IMR-90 (cell line): ENCODE measurements at regions of chr9 and their contacts with region 1.

Region 1: DNA sequence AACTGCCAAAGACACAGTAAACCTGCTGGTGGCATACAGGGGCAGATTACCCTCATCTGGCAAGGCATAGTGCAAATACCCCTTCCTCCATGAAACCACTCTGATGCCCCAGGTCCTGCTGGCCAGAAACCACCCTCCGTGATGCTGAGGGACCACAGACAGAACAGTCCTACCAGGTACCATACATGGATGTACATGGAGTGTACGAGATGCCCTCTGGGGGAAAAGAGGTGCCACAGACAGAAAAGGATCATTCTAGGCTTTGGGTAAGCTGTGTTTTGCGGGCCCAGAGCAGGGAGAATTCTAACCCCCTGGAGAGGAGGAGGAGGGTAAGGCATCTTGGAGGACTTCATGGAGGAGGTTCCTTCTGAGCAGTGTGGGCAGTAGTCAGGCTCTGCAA is 68.4 kb downstream of the GABBR2 start:
- DNase-seq: no peak
- ATAC-seq: no peak
- H3K4me3 ChIP-seq: no peak overlapping the region
- H3K27ac ChIP-seq: no peak overlapping the region
- H3K4me1 ChIP-seq: no peaks in the 10 kb centered on the region
- H3K27me3 ChIP-seq: no peaks in the 10 kb centered on the region
- CTCF ChIP-seq: no peak
- POLR2A ChIP-seq: no peak
- RAD21 ChIP-seq: no peak

Region 2: DNA sequence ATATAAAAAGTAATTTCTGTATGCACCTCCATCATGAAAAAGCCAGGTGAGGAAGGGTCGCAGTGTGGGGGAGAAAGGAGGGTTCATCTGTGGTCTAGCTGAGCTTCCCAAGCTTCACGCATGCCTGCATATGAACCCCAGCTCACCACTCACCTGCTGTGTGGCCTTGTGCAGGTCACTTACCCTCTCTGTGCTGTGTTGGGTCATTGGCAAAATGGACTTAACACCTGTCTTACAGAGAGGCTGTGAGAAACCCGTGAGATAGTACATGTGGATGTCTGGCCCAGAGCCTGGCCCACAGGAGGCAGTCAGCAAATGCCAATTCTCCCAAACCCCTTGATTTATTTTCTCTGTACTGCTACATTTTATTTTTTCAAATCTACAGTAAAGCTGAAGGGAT is 20.6 kb before region 1 on chr9:
- CTCF ChIA-PET with region 1: interaction called, 3 read pairs
- POLR2A ChIA-PET with region 1: interaction called, 4 read pairs
- dilution Hi-C with region 1: no loop called
- in situ Hi-C with region 1: no loop called
- intact Hi-C with region 1: loop called (anchors 2 kb)
- DNase-seq: no peak
- ATAC-seq: no peak
- H3K4me3 ChIP-seq: no peak overlapping the region
- H3K27ac ChIP-seq: no peak overlapping the region
- H3K4me1 ChIP-seq: no peaks in the 10 kb centered on the region
- H3K27me3 ChIP-seq: no peaks in the 10 kb centered on the region
- CTCF ChIP-seq: no peak
- POLR2A ChIP-seq: no peak
- RAD21 ChIP-seq: no peak